ENCODE measurements at regions of chr16 and their contacts with region 1.

Region 1: GRCh38 chr16:21599233-21600030 is at the start of gene METTL9:
- DNase-seq: peak; percentile 97

Region 2: DNA sequence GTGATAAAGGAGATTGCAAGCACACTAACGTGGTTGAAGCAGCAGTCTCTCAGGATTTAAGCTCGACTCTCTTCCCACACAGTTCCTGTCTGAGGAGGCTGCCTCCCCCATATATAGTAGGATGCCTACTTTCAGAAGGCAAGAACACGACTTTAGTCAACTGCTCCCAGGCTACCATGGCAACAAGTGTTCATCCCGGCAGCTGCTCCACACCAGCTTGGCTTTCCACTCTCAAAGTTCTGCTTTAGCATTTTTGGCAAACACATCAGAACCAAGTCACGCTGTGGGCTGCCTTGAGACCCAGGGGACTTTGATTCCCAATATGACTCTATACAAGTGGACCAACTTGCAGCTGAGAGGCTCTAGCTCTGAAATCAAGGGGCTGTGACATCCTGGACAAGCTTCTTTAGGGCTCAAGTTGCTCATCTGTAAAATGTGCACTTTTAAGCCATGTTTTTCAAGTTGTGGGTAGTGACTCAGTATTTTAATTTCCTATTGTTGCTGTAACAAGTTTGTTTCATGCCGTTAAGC is 404.6 kb before region 1 on chr16:
- in situ Hi-C with region 1: loop called (anchors 25 kb)
- DNase-seq: no peak

Region 3: GRCh38 chr16:21708533-21709115 is 109.2 kb after region 1 on chr16:
- in situ Hi-C with region 1: loop called (anchors 25 kb)
- DNase-seq: peak; percentile 78